CD14-positive monocyte (primary cell): ENCODE measurements at regions of chr2 and their contacts with region 1.

Region 1: DNA sequence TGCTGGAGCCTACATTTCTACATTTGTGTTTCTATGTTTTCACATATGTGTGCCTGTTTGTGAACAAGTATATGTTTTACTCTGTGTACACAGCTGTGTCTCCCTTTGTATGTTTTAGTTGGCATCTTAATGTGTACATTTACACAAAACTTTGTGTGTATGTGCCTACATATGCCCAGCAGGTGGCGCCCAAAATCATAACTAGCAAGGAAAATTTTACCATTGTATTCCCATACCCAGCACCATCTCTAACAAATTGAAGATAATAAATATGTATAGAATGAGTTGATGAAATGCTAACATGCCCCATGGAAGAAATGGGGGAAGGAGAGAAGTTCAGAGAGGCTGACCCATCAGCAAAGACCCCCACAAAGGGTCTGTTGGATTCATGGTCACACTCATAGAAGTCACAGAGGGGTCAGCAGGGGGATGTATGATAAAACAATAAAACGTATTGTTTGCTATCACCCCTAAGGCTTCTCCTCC is 48.1 kb downstream of the PKDCC start:
- DNase-seq: peak; percentile 59 to 78 (median 76)
- H3K4me3 ChIP-seq: no peak overlapping the region
- H3K4me3 Mint-ChIP-seq: no peak overlapping the region
- H3K27ac ChIP-seq: no peak overlapping the region
- H3K27ac Mint-ChIP-seq: peak overlapping the region in 1 of 7 donors; percentile 95
- H3K4me1 ChIP-seq: peaks cover 63 to 65% of the 10 kb centered on the region in 2 donors
- H3K4me1 Mint-ChIP-seq: peaks cover 64% of the 10 kb centered on the region
- H3K27me3 ChIP-seq: no peaks in the 10 kb centered on the region
- H3K27me3 Mint-ChIP-seq: peaks cover 1 to 5% (median 4%) of the 10 kb centered on the region in 3 donors
- CTCF ChIP-seq: peak; percentile 86

Region 2: DNA sequence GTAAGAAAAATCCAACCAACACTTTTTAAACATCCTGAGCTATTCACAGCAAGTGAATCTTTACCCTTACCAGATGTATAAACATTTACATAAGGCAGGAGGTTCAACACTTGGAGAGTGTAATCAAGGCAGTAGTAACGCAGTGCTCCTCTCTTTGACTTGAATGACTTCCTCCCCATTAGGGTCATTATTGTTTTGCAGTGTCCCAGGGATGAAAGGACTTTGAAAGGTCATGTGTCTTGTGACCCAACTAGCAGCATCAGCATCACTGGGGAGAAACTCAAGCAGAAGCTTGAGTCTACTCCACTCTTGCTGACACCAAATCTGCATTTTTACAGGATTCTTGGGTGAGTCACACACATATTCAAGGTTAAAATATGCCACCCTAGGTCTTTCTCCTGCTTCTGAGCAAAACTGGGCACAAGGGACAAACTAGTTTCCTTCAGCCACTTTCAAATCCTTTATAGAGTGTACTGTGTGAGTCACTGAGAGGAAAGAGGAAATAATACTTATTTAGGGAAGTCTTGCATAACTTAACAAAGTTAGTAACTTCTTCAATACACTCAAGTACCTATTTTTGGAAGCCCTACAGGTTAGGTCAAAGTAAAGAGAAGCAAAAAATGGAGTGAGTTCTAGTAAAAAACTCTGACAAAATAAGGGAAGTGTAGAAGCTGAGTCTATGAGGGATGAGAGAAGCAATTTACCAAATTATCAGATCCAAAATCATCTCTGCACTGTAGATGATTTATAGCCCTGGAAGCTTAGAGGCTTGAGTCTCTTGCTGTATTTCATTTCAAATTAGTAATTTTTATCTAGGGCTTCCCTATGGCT is 22.2 kb after region 1 on chr2:
- intact Hi-C with region 1: loop called in 1 of 2 experiments (anchors 2 kb)
- DNase-seq: peak; percentile 94 to 97 (median 97)
- H3K4me3 ChIP-seq: peak overlapping the region in 1 of 3 experiments; percentile 16
- H3K4me3 Mint-ChIP-seq: no peak overlapping the region
- H3K27ac ChIP-seq: peak overlapping the region in 1 of 2 donors; percentile 73
- H3K27ac Mint-ChIP-seq: peak overlapping the region; percentile 75 to 90 (median 85)
- H3K4me1 ChIP-seq: peaks cover 54 to 57% of the 10 kb centered on the region in 2 donors
- H3K4me1 Mint-ChIP-seq: peaks cover 53% of the 10 kb centered on the region
- H3K27me3 ChIP-seq: peaks cover under 1% of the 10 kb centered on the region in 2 donors
- H3K27me3 Mint-ChIP-seq: peaks cover under 1 to 8% (median 5%) of the 10 kb centered on the region in 3 donors
- CTCF ChIP-seq: no peak

Region 3: GRCh38 chr2:42132966-42133641 is 37.1 kb after region 1 on chr2:
- intact Hi-C with region 1: loop called (anchors 5 kb)
- DNase-seq: peak; percentile 67 to 91 (median 70)
- H3K4me3 ChIP-seq: peak overlapping the region in 1 of 3 experiments; percentile 16
- H3K4me3 Mint-ChIP-seq: peak overlapping the region in 1 of 2 donors; percentile 77
- H3K27ac ChIP-seq: peak overlapping the region; percentile 4 to 29
- H3K27ac Mint-ChIP-seq: peak overlapping the region; percentile 12 to 90 (median 80)
- H3K4me1 ChIP-seq: peaks cover 54 to 60% of the 10 kb centered on the region in 2 donors
- H3K4me1 Mint-ChIP-seq: peaks cover 65% of the 10 kb centered on the region
- H3K27me3 ChIP-seq: peaks cover 28 to 37% of the 10 kb centered on the region in 2 donors
- H3K27me3 Mint-ChIP-seq: peaks cover 44 to 60% (median 50%) of the 10 kb centered on the region in 3 donors
- CTCF ChIP-seq: no peak

Region 4: DNA sequence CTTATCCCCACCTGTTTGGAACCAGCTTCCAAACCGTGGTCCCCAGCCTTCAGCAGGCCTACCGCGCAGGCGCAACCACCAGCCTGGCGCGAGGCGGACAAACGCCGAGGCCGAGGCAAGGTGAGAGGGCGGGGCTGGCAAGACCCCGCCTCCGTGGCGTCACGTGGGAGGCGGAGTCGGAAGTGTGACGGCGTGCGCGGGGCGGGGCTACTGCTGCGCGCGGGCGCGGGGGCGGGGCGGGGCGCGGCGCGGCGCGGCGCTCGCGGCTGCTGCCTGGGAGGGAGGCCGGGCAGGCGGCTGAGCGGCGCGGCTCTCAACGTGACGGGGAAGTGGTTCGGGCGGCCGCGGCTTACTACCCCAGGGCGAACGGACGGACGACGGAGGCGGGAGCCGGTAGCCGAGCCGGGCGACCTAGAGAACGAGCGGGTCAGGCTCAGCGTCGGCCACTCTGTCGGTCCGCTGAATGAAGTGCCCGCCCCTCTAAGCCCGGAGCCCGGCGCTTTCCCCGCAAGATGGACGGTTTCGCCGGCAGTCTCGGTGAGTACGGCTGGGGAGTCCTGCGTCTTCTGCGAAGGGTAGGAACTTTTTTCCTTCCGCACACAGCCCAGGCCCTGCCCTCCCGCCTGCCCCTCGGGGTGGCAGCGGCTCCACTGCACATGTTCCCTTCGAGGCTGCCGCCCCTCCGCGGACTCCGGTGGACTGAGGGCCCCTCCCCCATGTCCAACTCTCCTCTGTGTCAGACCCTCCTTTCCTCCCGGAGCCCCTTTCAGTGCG is 73.3 kb after region 1 on chr2 and contains the start of gene EML4:
- intact Hi-C with region 1: loop called (anchors 5 to 10 kb)
- DNase-seq: peak; percentile 85 to 93 (median 86)
- H3K4me3 ChIP-seq: peak within 1 kb of the TSS; percentile 73 to 87 (median 86)
- H3K4me3 Mint-ChIP-seq: peak within 1 kb of the TSS in 1 of 2 donors; percentile 57
- H3K27ac ChIP-seq: peak within 1 kb of the TSS; percentile 85 to 90
- H3K27ac Mint-ChIP-seq: peak within 1 kb of the TSS in 4 of 7 donors; percentile 15 to 84 (median 63)
- H3K4me1 ChIP-seq: peaks cover 25 to 32% of the 10 kb centered on the region in 2 donors
- H3K4me1 Mint-ChIP-seq: peaks cover 11% of the 10 kb centered on the region
- H3K27me3 ChIP-seq: peaks cover 0 to 4% of the 10 kb centered on the region in 2 donors
- H3K27me3 Mint-ChIP-seq: peaks cover under 1 to 9% (median 4%) of the 10 kb centered on the region in 3 donors
- CTCF ChIP-seq: no peak
- polyA plus RNA-seq, gene EML4: 11.5 to 24.3 (median 15.0) TPM

Region 5: DNA sequence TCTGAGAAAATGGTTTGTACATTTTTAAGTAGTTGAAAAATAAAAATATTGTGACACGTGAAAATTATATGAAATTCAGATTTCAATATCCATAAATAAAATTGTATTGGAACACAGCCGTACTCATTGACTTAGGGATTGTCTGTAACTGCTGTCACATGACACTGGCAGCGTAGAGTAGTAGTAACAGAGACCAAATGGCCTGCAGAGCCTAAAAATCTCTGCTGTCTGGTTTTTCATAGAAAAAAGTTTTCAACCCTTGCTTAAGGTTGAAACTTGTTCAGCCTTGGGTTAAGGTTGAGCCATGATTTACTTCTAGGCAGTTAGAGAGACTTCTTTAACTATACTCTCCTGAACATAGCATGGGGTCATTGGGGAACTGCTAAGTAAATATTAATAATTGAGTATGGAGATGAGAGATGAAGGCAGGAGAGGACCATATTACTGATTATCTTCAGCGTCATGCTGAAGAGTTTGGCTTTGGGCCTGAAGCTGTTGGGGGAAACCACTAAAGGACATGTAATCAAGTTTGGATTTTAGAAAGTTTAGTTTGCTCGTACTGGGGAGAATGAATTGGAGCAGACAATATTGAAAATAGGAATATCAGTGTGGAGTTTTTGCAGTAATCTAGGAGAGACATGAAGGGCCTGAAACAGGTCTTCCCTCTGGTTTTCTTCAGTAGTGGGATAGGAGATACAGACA is 89.4 kb after region 1 on chr2:
- intact Hi-C with region 1: no loop called
- DNase-seq: no peak
- H3K4me3 ChIP-seq: no peak overlapping the region
- H3K4me3 Mint-ChIP-seq: no peak overlapping the region
- H3K27ac ChIP-seq: no peak overlapping the region
- H3K27ac Mint-ChIP-seq: no peak overlapping the region
- H3K4me1 ChIP-seq: peaks cover 11% of the 10 kb centered on the region in 2 donors
- H3K4me1 Mint-ChIP-seq: peaks cover 29% of the 10 kb centered on the region
- H3K27me3 ChIP-seq: no peaks in the 10 kb centered on the region
- H3K27me3 Mint-ChIP-seq: no peaks in the 10 kb centered on the region
- CTCF ChIP-seq: no peak

Region 6: DNA sequence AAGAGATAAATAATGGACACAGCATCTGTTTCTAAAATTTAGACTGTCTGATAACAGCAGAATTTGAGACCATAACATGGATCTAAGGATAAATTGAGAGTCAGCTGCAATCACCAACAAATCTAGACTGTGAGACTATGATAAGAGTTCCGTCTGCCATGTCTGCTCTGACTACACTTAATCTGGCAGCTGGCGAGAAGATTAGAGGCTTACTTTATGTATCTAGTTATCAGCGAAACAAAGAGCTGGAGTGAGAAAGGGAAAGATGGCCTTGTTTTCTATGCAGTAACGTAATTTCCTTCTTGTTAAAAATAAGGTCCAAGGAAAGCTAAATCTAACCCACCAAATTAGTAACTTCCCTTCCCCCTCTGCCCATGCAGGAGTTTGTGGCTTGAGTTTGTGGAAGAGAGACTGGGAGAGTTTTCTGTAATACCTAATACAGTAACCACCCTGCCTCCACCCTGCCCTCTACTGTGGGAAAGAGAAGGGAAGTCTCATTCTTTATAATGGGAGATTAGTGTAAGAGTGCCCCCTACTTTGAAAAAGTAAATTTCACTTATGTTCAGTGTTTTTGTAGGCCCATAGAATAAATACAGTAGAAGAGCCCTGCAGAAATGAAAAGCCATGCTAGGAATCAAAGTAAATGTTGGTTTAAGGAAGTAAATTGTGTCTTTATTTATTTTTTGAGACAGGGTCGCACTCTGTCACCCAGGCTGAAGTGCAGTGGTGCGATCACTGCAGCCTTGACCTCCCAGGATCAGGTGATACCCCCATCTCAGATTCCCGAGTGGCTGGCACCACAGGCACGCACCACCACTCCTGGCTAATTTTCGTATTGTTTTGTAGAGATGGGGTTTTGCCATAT is 100.7 kb after region 1 on chr2:
- intact Hi-C with region 1: loop called (anchors 5 kb)
- DNase-seq: peak; percentile 41 to 65 (median 65)
- H3K4me3 ChIP-seq: peak overlapping the region in 1 of 3 experiments; percentile 55
- H3K4me3 Mint-ChIP-seq: peak overlapping the region; percentile 50 to 73
- H3K27ac ChIP-seq: peak overlapping the region in 1 of 2 donors; percentile 66
- H3K27ac Mint-ChIP-seq: peak overlapping the region; percentile 61 to 80 (median 69)
- H3K4me1 ChIP-seq: peaks cover 31 to 50% of the 10 kb centered on the region in 2 donors
- H3K4me1 Mint-ChIP-seq: peaks cover 59% of the 10 kb centered on the region
- H3K27me3 ChIP-seq: no peaks in the 10 kb centered on the region
- H3K27me3 Mint-ChIP-seq: peaks cover 0 to 3% (median 2%) of the 10 kb centered on the region in 3 donors
- CTCF ChIP-seq: peak; percentile 80